ENCODE measurements at regions of chr11 and their contacts with region 1.

Region 1: GRCh38 chr11:132559331-132560036 is 972.8 kb downstream of the OPCML start:
- DNase-seq: no peak
- H3K4me3 ChIP-seq: no peak overlapping the region
- H3K27ac ChIP-seq: no peak overlapping the region
- H3K4me1 ChIP-seq: no peaks in the 10 kb centered on the region
- H3K27me3 ChIP-seq: peaks cover 0 to 4% of the 10 kb centered on the region in 2 donors
- CTCF ChIP-seq: no peak
- POLR2A ChIP-seq: no peak

Region 2: GRCh38 chr11:133197425-133197824 is 637.9 kb after region 1 on chr11:
- intact Hi-C with region 1: loop called (anchors 5 kb)
- DNase-seq: no peak
- H3K4me3 ChIP-seq: no peak overlapping the region
- H3K27ac ChIP-seq: no peak overlapping the region
- H3K4me1 ChIP-seq: no peaks in the 10 kb centered on the region
- H3K27me3 ChIP-seq: no peaks in the 10 kb centered on the region
- CTCF ChIP-seq: no peak
- POLR2A ChIP-seq: no peak

Measured in breast epithelium (tissue), 4 donors.